HEK293T (cell line): ENCODE measurements at regions of chr2 and their contacts with region 1.

Region 1: DNA sequence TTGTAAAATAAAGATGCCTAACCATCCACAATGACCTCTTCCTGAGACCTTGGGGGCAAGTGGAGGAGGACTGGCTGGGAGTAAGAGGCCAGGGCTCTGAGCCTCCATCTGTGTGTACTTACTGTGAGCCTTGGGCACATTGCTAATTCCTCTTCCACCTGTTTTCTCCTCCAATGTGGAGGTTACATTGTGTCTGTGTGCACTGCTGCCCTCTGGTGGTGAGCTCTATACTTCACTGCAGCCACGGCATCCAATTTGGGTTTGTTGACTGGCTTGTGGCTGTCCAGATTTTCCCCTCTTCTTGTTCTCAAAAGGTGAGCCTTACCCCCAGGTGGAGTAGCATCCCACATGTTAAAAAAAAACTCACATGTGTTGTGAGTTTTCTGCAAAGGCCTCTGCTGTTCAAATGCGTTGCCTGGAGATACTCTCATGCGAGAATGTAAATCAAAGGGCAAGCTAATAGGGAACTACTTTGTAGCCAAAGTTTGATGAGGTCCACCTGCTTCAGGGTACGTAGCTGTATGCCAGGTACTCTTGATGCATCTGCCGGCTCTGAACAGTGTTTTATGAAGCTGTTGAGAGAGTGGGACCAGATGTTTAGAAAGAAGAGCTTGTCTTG is 80.8 kb downstream of the APOB start:
- DNase-seq: peak; percentile 64

Region 2: DNA sequence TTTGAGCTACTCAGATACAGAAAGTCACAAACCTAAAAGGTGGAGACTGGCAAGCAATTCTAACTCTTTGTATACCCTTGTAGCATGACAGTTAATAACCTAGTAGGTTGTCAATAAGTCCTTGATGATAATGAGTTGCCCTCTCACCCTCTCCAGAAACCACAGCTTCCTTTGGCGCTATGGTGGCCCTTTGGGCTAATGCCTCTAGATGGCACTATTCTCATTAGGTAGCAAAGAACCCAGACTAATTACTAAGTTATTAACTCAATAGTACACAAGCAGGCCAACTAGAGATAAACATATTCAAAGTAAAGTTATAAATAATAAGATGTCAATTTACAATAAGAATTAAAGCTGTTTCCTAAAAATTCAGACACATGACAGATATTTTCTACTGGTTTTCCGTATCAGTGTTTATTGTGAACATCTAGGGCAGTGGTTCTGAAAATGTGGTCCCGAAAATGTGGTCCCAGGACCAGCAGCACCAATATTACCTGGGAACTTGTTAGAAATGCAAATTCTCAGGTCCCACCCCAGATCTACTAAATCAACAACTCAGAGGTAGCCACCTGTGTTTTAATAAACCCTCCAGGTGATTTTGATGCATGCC is 181.3 kb before region 1 on chr2:
- CTCF ChIA-PET with region 1: interaction called, 15 read pairs
- POLR2A ChIA-PET with region 1: no interaction called
- DNase-seq: peak; percentile 15

Region 3: GRCh38 chr2:20900052-20900636 is 62.9 kb before region 1 on chr2:
- CTCF ChIA-PET with region 1: no interaction called
- POLR2A ChIA-PET with region 1: no interaction called
- DNase-seq: no peak

Region 4: GRCh38 chr2:21001225-21001946 is 38.3 kb after region 1 on chr2:
- CTCF ChIA-PET with region 1: no interaction called
- POLR2A ChIA-PET with region 1: no interaction called
- DNase-seq: no peak

Region 5: DNA sequence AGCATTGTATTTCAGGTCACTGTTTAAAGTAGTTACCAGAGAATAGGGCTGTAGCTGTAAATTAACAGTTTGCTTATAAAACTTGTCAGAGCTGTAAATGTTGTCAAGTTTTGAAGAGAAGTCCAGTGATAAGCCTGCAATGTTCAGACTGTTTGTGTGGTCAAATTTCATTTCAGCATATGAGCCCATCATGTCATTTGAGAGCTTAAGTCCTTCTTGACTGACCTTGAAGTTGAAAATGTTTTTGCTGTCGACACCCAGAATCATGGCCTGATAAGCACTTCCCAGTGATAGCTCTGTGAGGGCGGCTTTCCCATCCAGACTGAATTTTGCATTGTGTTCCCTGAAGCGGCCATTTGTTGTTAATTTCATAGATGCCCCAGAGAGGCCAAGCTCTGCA is 48.4 kb after region 1 on chr2:
- CTCF ChIA-PET with region 1: no interaction called
- POLR2A ChIA-PET with region 1: no interaction called
- DNase-seq: no peak

Region 6: DNA sequence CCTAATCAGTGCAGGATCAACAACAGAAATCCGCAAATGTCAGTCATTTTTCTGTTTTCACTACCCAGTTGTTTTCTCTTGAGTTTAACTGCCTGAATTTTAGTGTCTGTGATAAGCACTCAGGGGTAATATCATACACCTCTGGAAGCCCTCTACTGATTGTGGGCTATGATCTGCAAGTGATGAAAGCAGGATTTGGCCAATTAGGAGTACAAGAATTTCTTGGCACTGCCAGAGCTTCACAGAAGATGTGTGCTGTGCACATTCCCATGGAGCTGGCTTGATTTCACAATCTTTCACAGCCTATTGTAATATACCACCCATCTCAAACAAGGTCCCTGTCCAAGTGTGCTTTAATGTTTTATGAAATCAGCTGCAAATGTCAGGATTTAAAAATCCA is 133.4 kb after region 1 on chr2:
- CTCF ChIA-PET with region 1: no interaction called
- POLR2A ChIA-PET with region 1: no interaction called
- DNase-seq: no peak